GM23248 (cell line): ENCODE measurements at regions of chr10 and their contacts with region 1.

Region 1: GRCh38 chr10:9211228-9211627 is 1156.7 kb downstream of the GATA3 start:
- DNase-seq: peak; percentile 25
- H3K4me3 ChIP-seq: no peak overlapping the region
- H3K27ac ChIP-seq: no peak overlapping the region
- H3K4me1 ChIP-seq: no peaks in the 10 kb centered on the region
- H3K27me3 ChIP-seq: no peaks in the 10 kb centered on the region; the same call in 1 of the 2 replicates

Region 2: GRCh38 chr10:7866176-7866575 is 1345.1 kb before region 1 on chr10:
- in situ Hi-C with region 1: loop called (anchors 10 kb)
- DNase-seq: no peak
- H3K4me3 ChIP-seq: no peak overlapping the region
- H3K27ac ChIP-seq: no peak overlapping the region
- H3K4me1 ChIP-seq: no peaks in the 10 kb centered on the region
- H3K27me3 ChIP-seq: no peaks in the 10 kb centered on the region

Region 3: DNA sequence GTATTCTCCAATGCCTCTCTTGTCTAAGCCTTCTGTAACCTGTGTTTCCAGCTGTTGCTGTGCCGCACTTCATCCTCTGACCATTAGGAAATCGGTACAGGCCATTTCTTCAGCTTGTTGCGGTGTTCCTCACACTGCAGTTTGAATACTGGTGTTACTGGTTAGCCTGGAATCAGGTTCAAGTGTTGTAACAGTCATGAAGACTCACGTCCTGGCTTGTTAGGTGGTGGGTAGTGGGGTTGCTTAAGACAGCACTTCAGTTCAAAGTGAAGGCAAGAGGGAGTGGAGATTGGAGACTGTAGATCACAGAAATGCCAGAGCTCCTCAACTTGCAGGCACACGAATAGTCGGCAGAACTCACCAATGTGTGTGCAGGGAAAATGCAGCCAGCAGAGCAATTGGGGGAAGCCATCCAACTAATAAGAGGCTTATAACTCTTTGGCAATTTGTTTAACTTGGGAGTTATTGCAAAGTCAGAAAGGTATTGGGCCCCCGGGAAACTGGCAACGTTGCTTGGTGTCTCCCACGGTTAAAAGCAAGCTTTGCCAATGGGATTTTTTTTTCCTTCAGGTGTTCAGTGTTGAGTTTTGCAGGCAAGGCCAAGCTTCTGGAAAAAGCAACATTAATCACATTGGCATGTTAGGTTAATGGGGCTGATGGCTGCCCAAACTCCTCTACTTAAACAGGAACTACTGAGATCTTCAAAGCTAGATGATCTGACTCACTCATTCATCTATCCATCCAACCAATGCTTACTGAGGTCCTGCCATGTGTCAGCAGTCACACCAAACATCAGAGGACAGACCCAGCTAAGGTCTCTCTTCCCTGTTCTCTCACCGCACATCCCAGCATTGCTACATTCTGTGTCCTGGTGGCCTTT is 775.8 kb before region 1 on chr10:
- in situ Hi-C with region 1: no loop called
- DNase-seq: no peak
- H3K4me3 ChIP-seq: no peak overlapping the region
- H3K27ac ChIP-seq: no peak overlapping the region
- H3K4me1 ChIP-seq: no peaks in the 10 kb centered on the region
- H3K27me3 ChIP-seq: no peaks in the 10 kb centered on the region

Region 4: GRCh38 chr10:8919280-8919679 is 291.9 kb before region 1 on chr10:
- in situ Hi-C with region 1: no loop called
- DNase-seq: no peak
- H3K4me3 ChIP-seq: no peak overlapping the region
- H3K27ac ChIP-seq: no peak overlapping the region
- H3K4me1 ChIP-seq: no peaks in the 10 kb centered on the region
- H3K27me3 ChIP-seq: no peaks in the 10 kb centered on the region

Region 5: GRCh38 chr10:10209167-10209566 is 997.9 kb after region 1 on chr10:
- in situ Hi-C with region 1: no loop called
- DNase-seq: peak; percentile 45
- H3K4me3 ChIP-seq: no peak overlapping the region
- H3K27ac ChIP-seq: no peak overlapping the region
- H3K4me1 ChIP-seq: no peaks in the 10 kb centered on the region
- H3K27me3 ChIP-seq: no peaks in the 10 kb centered on the region